A549 (cell line): ENCODE measurements at regions of chr7 and their contacts with region 1.

Region 1: GRCh38 chr7:22110227-22110839 is 164.6 kb upstream of the CDCA7L start:
- DNase-seq: peak; percentile 63 to 81
- ATAC-seq: peak; percentile 79 to 94
- H3K4me3 ChIP-seq: no peak overlapping the region
- H3K27ac ChIP-seq: no peak overlapping the region
- H3K4me1 ChIP-seq: no peaks in the 10 kb centered on the region
- CTCF ChIP-seq: peak; percentile 94
- EP300 ChIP-seq: no peak
- POLR2A ChIP-seq: no peak
- RAD21 ChIP-seq: peak; percentile 95 to 96

Region 2: DNA sequence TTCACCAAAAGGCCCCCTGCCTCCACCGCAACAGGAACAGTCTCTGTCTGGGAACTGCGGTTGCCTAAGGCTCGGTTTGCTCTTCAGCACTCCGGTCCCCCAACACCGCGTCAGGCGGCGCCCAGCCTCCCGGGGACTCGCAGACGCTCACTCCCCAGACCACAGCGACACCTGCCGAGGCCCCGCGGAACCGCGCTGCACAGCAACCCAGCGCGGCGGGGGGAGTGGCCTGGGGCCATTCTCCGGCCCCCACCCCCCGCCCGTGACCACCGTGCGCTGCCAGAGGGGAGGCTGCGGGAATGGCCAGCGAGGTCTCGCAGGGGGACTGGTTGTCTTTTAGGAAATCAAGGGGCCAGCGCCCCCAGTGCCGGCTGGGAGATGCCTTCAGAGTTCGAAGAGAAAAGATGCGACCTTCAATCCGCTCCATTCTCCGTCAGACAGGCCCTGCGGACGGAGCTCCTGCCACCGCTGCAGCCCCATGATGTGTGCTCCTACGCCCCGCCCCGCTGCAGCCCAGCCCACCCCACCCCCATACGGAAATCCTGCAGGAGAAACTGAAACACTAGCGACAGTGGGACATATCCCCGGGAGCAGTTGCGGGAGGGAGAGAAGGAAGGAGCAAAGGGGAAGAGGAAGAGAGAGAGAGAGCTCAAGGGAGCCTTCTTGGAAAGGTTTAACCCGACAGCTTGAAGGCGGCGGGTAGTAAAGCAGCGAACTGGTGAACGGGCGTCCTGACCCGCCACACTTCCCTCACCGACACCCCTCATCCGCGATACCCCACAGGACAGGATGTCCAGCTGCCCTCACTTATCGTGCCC is 27.2 kb before region 1 on chr7:
- CTCF ChIA-PET with region 1: interaction called, 26 read pairs
- POLR2A ChIA-PET with region 1: no interaction called
- DNase-seq: peak; percentile 65 to 75
- ATAC-seq: peak; percentile 96 to 98
- H3K4me3 ChIP-seq: peak overlapping the region; percentile 46
- H3K27ac ChIP-seq: peak overlapping the region; percentile 52 to 77
- H3K4me1 ChIP-seq: no peaks in the 10 kb centered on the region
- CTCF ChIP-seq: peak; percentile 90
- EP300 ChIP-seq: no peak
- POLR2A ChIP-seq: no peak; the same call in 1 of the 2 replicates
- RAD21 ChIP-seq: peak; percentile 60 to 82

Region 3: DNA sequence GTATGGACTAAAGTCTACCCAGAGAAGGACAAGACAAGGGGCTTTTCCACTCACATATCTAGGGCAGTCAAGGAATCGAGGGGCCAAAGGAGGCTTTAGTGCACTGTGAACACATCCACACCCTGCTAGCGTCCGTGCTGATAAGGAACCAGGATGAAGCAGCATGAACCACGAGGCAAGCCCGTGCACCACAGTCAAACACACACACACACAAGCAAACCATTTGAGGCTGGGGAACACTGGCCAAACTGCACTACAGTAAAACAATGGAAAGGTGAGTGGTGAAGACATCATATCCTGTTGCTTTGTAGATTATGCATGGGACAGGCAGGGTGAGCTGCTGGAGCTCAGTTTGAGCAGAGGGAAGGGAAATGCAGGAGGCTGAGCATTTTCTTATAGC is 12.8 kb after region 1 on chr7:
- CTCF ChIA-PET with region 1: interaction called, 13 read pairs
- POLR2A ChIA-PET with region 1: no interaction called
- DNase-seq: no peak
- ATAC-seq: no peak
- H3K4me3 ChIP-seq: no peak overlapping the region
- H3K27ac ChIP-seq: no peak overlapping the region
- H3K4me1 ChIP-seq: no peaks in the 10 kb centered on the region
- CTCF ChIP-seq: no peak
- EP300 ChIP-seq: no peak
- POLR2A ChIP-seq: no peak
- RAD21 ChIP-seq: no peak

Region 4: DNA sequence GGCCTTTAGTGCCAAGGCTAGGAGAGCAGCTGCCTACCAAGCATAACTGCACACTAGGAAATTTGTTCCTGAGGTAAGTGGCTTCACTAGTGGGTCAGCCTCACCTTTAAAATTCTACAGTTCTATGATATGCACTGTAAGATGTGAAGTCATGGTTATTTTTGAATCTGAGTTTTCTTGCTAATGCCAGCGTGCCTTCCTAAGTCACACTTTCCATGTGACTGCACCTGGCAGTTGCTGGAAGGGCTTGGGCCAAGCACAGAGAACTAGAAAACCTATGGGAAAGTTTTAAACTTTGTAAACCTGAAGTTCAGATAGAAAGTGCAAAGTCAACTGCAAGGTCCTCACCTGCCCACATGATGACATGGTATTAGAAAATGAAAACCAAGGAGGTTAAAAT is 347.1 kb after region 1 on chr7:
- CTCF ChIA-PET with region 1: interaction called, 10 read pairs
- POLR2A ChIA-PET with region 1: no interaction called
- DNase-seq: no peak
- ATAC-seq: no peak
- H3K4me3 ChIP-seq: no peak overlapping the region
- H3K27ac ChIP-seq: no peak overlapping the region
- H3K4me1 ChIP-seq: no peaks in the 10 kb centered on the region
- CTCF ChIP-seq: no peak
- EP300 ChIP-seq: no peak
- POLR2A ChIP-seq: no peak
- RAD21 ChIP-seq: no peak

Region 5: DNA sequence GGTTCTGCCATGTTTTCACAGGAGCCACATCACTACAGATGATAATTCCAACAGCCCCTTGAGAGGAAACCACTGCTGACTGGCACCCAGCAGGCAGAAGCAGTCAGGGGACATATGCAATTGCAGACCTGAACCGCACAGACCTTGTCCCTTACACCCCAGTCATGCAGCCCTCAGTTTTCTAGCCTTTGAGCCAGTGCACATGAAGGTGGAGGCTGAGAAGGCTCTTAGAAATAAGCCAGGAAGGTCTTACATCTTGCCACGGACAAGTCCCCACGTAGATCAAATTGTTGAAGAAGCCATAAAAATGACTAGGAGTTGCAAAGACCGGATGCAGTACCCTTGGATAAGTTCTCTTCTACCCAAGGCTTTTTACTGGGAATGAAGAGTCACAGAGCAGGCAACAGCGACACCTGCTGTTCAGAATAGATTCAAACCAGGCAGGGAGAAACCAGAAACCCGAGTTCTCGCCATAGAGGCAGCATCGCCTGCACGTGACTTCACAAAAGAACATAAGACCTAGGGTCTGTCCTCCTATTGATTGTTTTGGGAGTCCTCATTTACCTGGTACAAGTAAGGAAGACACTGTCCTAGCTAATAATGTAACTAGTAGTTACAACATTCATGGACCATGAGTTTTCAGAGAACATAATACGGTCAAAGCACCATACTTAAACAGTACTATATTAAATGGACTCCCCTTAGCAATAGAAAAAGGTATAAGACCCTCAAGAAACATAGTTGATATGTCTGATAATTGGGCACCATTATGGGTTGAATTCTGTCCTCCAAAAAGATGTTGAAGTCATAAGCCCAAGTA is 378.5 kb after region 1 on chr7:
- CTCF ChIA-PET with region 1: interaction called, 82 read pairs
- POLR2A ChIA-PET with region 1: no interaction called
- DNase-seq: peak; percentile 57 to 59
- ATAC-seq: peak; percentile 91 to 94
- H3K4me3 ChIP-seq: no peak overlapping the region
- H3K27ac ChIP-seq: no peak overlapping the region
- H3K4me1 ChIP-seq: no peaks in the 10 kb centered on the region
- CTCF ChIP-seq: peak; percentile 91
- EP300 ChIP-seq: no peak
- POLR2A ChIP-seq: no peak
- RAD21 ChIP-seq: peak; percentile 88 to 91

Region 6: GRCh38 chr7:22617166-22617565 is 506.8 kb after region 1 on chr7:
- CTCF ChIA-PET with region 1: no interaction called
- POLR2A ChIA-PET with region 1: no interaction called
- DNase-seq: no peak
- ATAC-seq: no peak
- H3K4me3 ChIP-seq: no peak overlapping the region
- H3K27ac ChIP-seq: no peak overlapping the region
- H3K4me1 ChIP-seq: no peaks in the 10 kb centered on the region
- CTCF ChIP-seq: no peak
- EP300 ChIP-seq: no peak
- POLR2A ChIP-seq: no peak
- RAD21 ChIP-seq: no peak